Testis (tissue), 5 donors: ENCODE measurements at regions of chrX and their contacts with region 1.

Region 1: GRCh38 chrX:153763989-153764755 is at the start of gene PLXNB3:
- DNase-seq: peak; percentile 79
- H3K4me3 ChIP-seq: no peak within 1 kb of the TSS
- H3K27ac ChIP-seq: peak within 1 kb of the TSS; percentile 39 to 72
- H3K4me1 ChIP-seq: peaks cover 14% of the 10 kb centered on the region
- H3K27me3 ChIP-seq: no peaks in the 10 kb centered on the region
- CTCF ChIP-seq: peak; percentile 71 to 81 (median 80)
- POLR2A ChIP-seq: no peak
- total RNA-seq, gene PLXNB3: 49.3 to 57.9 TPM

Region 2: DNA sequence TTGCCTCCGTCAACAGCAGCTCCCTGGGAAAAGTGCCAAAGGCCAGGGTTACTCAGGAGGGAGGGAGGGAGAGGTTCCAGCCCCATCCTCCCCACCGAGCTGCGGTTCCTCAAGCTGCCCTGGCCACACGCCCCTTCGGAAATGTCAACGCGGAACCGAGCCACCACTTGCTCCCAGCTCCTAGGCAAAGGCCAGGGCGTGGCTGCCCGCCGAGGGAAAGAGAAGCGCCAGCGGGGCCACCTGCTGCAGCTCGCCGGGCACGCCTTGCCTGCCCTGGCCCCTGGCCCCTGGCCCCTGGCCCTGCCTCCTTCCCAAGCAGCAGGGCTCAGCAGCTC is 61.2 kb before region 1 on chrX:
- intact Hi-C with region 1: no loop called
- DNase-seq: no peak
- H3K4me3 ChIP-seq: no peak overlapping the region
- H3K27ac ChIP-seq: no peak overlapping the region
- H3K4me1 ChIP-seq: peaks cover 3% of the 10 kb centered on the region
- H3K27me3 ChIP-seq: no peaks in the 10 kb centered on the region
- CTCF ChIP-seq: no peak
- POLR2A ChIP-seq: no peak

Region 3: GRCh38 chrX:153861151-153861550 is 97.0 kb after region 1 on chrX:
- intact Hi-C with region 1: no loop called
- DNase-seq: no peak
- H3K4me3 ChIP-seq: no peak overlapping the region
- H3K27ac ChIP-seq: no peak overlapping the region
- H3K4me1 ChIP-seq: no peaks in the 10 kb centered on the region
- H3K27me3 ChIP-seq: no peaks in the 10 kb centered on the region
- CTCF ChIP-seq: no peak
- POLR2A ChIP-seq: no peak

Region 4: GRCh38 chrX:153953342-153953830 is 189.2 kb after region 1 on chrX:
- intact Hi-C with region 1: loop called (anchors 10 kb)
- DNase-seq: peak; percentile 72
- H3K4me3 ChIP-seq: no peak overlapping the region
- H3K27ac ChIP-seq: peak overlapping the region; percentile 11 to 30
- H3K4me1 ChIP-seq: peaks cover 3% of the 10 kb centered on the region
- H3K27me3 ChIP-seq: no peaks in the 10 kb centered on the region
- CTCF ChIP-seq: peak; percentile 82 to 90 (median 90)
- POLR2A ChIP-seq: no peak